Ovary (tissue), 10 donors: ENCODE measurements at regions of chr6 and their contacts with region 1.

Region 1: GRCh38 chr6:111861431-111861885 is 11.8 kb downstream of the FYN start:
- DNase-seq: no peak
- H3K4me3 ChIP-seq: no peak overlapping the region
- H3K27ac ChIP-seq: no peak overlapping the region
- H3K4me1 ChIP-seq: peaks cover 4% of the 10 kb centered on the region
- H3K27me3 ChIP-seq: no peaks in the 10 kb centered on the region
- CTCF ChIP-seq: no peak
- EP300 ChIP-seq: no peak
- POLR2A ChIP-seq: no peak

Region 2: GRCh38 chr6:111737065-111737521 is 124.4 kb before region 1 on chr6:
- intact Hi-C with region 1: loop called in 1 of 4 experiments (anchors 10 kb)
- DNase-seq: no peak
- H3K4me3 ChIP-seq: no peak overlapping the region
- H3K27ac ChIP-seq: no peak overlapping the region
- H3K4me1 ChIP-seq: peaks cover 9% of the 10 kb centered on the region
- H3K27me3 ChIP-seq: no peaks in the 10 kb centered on the region
- CTCF ChIP-seq: no peak
- EP300 ChIP-seq: no peak
- POLR2A ChIP-seq: no peak